Heart left ventricle (tissue), 16 donors: ENCODE measurements at regions of chr13 and their contacts with region 1.

Region 1: DNA sequence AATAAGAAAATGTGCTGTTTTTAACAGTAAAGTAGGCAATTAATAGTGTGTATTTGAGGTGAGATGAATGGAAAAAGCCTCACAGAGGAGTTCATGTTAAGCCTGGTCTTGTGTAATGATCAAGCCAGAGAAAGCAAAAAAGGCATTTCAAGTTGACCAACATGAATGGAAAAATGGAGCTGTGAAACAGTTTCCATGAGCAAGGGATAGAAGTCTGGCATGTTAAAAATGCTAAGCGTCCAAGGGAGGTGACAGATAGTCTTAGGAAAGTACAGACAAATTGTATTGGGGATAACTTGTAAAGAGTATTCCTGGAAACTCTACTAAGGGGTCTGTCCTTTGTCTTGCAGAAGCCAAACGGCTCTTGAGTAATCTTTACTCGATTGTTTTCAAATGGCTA is 506.8 kb upstream of the ATXN8OS start:
- DNase-seq: no peak
- ATAC-seq: no peak
- H3K4me3 ChIP-seq: no peak overlapping the region
- H3K27ac ChIP-seq: no peak overlapping the region
- H3K4me1 ChIP-seq: no peaks in the 10 kb centered on the region
- H3K27me3 ChIP-seq: no peaks in the 10 kb centered on the region
- CTCF ChIP-seq: no peak
- POLR2A ChIP-seq: no peak

Region 2: GRCh38 chr13:69545551-69545950 is 55.3 kb before region 1 on chr13:
- intact Hi-C with region 1: no loop called
- DNase-seq: no peak
- ATAC-seq: no peak
- H3K4me3 ChIP-seq: no peak overlapping the region
- H3K27ac ChIP-seq: no peak overlapping the region
- H3K4me1 ChIP-seq: no peaks in the 10 kb centered on the region
- H3K27me3 ChIP-seq: no peaks in the 10 kb centered on the region
- CTCF ChIP-seq: no peak
- POLR2A ChIP-seq: no peak

Region 3: GRCh38 chr13:69589531-69590235 is 11.1 kb before region 1 on chr13:
- intact Hi-C with region 1: loop called in 1 of 10 experiments (anchors 2 kb)
- DNase-seq: no peak
- ATAC-seq: no peak
- H3K4me3 ChIP-seq: no peak overlapping the region
- H3K27ac ChIP-seq: no peak overlapping the region
- H3K4me1 ChIP-seq: no peaks in the 10 kb centered on the region
- H3K27me3 ChIP-seq: no peaks in the 10 kb centered on the region
- CTCF ChIP-seq: no peak
- POLR2A ChIP-seq: no peak